ENCODE measurements at regions of chr14 and their contacts with region 1.

Region 1: GRCh38 chr14:64040044-64040443 is 187.2 kb downstream of the SYNE2 start:
- DNase-seq: no peak
- H3K4me3 ChIP-seq: no peak overlapping the region
- H3K27ac ChIP-seq: no peak overlapping the region
- H3K4me1 ChIP-seq: no peaks in the 10 kb centered on the region
- H3K27me3 ChIP-seq: no peaks in the 10 kb centered on the region
- CTCF ChIP-seq: peak in 1 of 3 experiments; percentile 33

Region 2: GRCh38 chr14:63788011-63788933 is 251.8 kb before region 1 on chr14:
- dilution Hi-C with region 1: no loop called
- DNase-seq: no peak
- H3K4me3 ChIP-seq: no peak overlapping the region
- H3K27ac ChIP-seq: no peak overlapping the region
- H3K4me1 ChIP-seq: no peaks in the 10 kb centered on the region
- H3K27me3 ChIP-seq: no peaks in the 10 kb centered on the region
- CTCF ChIP-seq: no peak

Region 3: GRCh38 chr14:64005822-64006221 is 34.2 kb before region 1 on chr14:
- dilution Hi-C with region 1: no loop called
- DNase-seq: no peak
- H3K4me3 ChIP-seq: no peak overlapping the region
- H3K27ac ChIP-seq: no peak overlapping the region
- H3K4me1 ChIP-seq: no peaks in the 10 kb centered on the region
- H3K27me3 ChIP-seq: no peaks in the 10 kb centered on the region
- CTCF ChIP-seq: no peak

Region 4: GRCh38 chr14:64294672-64295413 is 254.8 kb after region 1 on chr14:
- dilution Hi-C with region 1: loop called (anchors 25 kb)
- DNase-seq: no peak
- H3K4me3 ChIP-seq: peak overlapping the region in 2 of 3 experiments; percentile 36 to 71
- H3K27ac ChIP-seq: no peak overlapping the region
- H3K4me1 ChIP-seq: peaks cover 22% of the 10 kb centered on the region
- H3K27me3 ChIP-seq: peaks cover 8% of the 10 kb centered on the region
- CTCF ChIP-seq: peak; percentile 60 to 89 (median 78)